Activated CD4-positive, alpha-beta T cell treated with anti-CD3 and anti-CD28 coated beads, Interleukin-2, amount 10 ng/mL, durations not matched to agents 24 days and 14 days (primary cell): ENCODE measurements at regions of chr3 and their contacts with region 1.

Region 1: DNA sequence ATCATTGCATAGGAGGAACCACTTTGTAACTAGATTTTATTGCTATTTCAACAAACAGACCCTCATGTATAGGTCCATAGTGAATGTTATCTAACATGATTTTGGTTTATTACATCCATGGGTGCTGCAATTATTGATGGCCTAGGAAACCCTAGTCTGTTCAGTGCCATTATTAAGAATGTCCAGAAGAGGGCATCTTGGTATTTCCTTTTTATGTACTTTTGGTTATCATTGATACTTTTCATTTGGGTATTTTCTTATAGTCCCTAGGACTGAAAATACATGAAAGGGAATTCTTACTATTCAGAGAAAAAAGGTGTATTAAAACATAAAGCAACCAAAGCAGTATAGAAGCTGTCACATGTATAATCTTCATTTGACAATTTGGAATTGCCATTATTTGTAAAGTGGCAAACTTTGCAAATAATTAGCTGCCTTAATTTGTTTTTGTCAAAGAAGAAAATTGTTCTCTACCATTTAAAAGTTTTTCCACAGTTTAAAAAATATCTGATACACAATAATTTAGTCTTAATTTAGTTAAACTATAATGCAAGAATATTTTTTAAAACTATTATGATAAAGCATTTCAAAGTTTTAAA is 48.7 kb downstream of the CNOT10 start:
- DNase-seq: no peak
- H3K4me3 Mint-ChIP-seq: no peak overlapping the region
- H3K27ac Mint-ChIP-seq: no peak overlapping the region
- H3K4me1 Mint-ChIP-seq: peaks cover 2% of the 10 kb centered on the region
- H3K27me3 Mint-ChIP-seq: no peaks in the 10 kb centered on the region

Region 2: GRCh38 chr3:32781210-32781968 is 47.7 kb after region 1 on chr3:
- intact Hi-C with region 1: loop called (anchors 2 kb)
- DNase-seq: peak; percentile 91
- H3K4me3 Mint-ChIP-seq: peak overlapping the region; percentile 94
- H3K27ac Mint-ChIP-seq: peak overlapping the region; percentile 67
- H3K4me1 Mint-ChIP-seq: peaks cover 4% of the 10 kb centered on the region
- H3K27me3 Mint-ChIP-seq: peaks cover 11% of the 10 kb centered on the region

Region 3: GRCh38 chr3:32901432-32902409 is 168.0 kb after region 1 on chr3:
- intact Hi-C with region 1: loop called (anchors 10 kb)
- DNase-seq: peak; percentile 78
- H3K4me3 Mint-ChIP-seq: peak overlapping the region; percentile 51
- H3K27ac Mint-ChIP-seq: no peak overlapping the region
- H3K4me1 Mint-ChIP-seq: peaks cover 2% of the 10 kb centered on the region
- H3K27me3 Mint-ChIP-seq: peaks cover 25% of the 10 kb centered on the region

Region 4: DNA sequence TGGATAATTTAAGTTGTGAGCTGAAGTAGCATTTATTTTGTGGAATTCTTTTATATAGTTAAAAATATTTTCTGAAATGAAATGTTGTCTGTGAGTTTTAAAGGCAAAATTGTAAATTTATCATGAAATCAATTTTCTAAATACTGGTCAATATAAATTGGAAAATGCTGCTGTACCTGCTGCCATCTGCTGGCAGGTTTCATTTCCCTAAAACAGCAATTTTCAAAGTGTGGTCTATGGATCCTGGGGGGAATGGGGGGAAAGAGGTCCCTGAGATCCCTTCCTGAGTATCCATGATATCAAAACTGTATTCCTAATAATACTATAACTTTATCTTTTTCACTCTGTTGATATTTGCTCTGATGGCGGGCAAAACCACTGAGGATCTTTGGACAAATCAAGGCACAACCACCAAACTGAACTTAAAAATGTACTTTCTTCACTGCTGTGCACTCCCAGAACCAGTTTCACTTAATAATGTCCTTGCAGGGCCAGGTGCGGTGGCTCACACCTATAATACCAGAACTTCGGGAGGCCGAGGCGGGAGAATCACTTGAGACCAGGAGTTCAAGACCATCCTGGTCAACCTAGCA is 200.5 kb after region 1 on chr3:
- intact Hi-C with region 1: loop called (anchors 1 kb)
- DNase-seq: peak; percentile 71
- H3K4me3 Mint-ChIP-seq: no peak overlapping the region
- H3K27ac Mint-ChIP-seq: no peak overlapping the region
- H3K4me1 Mint-ChIP-seq: no peaks in the 10 kb centered on the region
- H3K27me3 Mint-ChIP-seq: peaks cover 11% of the 10 kb centered on the region